MCF 10A (cell line): ENCODE measurements at regions of chr19 and their contacts with region 1.

Region 1: GRCh38 chr19:44164673-44165512 is at the start of gene ZNF226:
- DNase-seq: peak; percentile 98
- H3K4me3 Mint-ChIP-seq: peak within 1 kb of the TSS; percentile 98
- H3K27ac Mint-ChIP-seq: peak within 1 kb of the TSS; percentile 96
- H3K4me1 Mint-ChIP-seq: peaks cover 9% of the 10 kb centered on the region
- H3K27me3 Mint-ChIP-seq: no peaks in the 10 kb centered on the region
- CTCF ChIP-seq: no peak
- total RNA-seq, gene ZNF226: 23.4 and 32.5 TPM in 2 replicates

Region 2: DNA sequence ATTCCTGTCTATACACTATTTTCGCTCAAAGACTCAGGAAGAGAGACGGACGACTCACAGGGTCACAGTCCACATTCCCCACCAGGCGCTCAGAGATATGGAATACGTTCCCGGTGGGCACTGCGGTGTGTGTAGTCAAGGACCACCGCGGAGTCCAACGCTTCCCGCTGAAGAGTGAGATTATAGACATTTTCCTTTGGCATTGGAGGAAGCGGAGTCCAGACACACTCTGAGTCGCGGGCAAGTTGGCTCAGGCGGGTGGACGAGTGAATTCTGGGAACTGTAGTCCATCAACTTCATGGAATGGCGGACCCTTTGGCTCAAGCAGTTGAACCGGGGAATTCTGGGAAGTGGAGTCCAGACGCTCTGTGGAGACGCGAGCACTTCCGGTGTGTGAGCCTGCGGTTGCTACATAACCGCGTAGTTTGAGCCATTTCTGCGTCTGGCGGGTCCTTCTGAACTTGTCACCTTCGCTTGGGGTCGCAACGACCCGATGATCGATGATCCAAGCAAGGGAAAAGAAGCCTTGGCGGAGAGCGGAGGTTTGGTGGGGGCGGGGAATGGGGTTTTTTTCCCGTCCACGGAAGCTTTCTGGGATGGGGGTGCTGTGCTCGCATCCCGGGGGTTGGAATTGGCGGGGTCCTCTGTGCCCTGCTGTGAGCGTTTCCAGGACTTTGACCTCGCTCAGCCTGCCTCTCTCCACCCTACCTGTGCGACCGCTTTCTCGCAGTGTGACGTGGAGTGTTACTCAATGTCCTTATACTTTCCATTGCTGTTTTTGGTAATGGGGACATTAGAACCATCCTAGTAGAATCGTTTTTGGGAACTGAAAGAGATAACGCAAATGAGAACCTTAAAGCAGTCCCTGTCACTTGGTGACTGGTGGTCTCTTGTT is 162.1 kb before region 1 on chr19 and contains the start of gene ZNF230:
- CTCF ChIA-PET with region 1: interaction called, 3 read pairs
- POLR2A ChIA-PET with region 1: interaction called, 18 read pairs
- intact Hi-C with region 1: no loop called
- DNase-seq: peak; percentile 99
- H3K4me3 Mint-ChIP-seq: peak within 1 kb of the TSS; percentile 84
- H3K27ac Mint-ChIP-seq: peak within 1 kb of the TSS; percentile 90
- H3K4me1 Mint-ChIP-seq: peaks cover 14% of the 10 kb centered on the region
- H3K27me3 Mint-ChIP-seq: no peaks in the 10 kb centered on the region
- CTCF ChIP-seq: no peak
- total RNA-seq, gene ZNF230: 2.9 and 4.0 TPM in 2 replicates

Region 3: GRCh38 chr19:44019498-44019897 is 145.4 kb before region 1 on chr19:
- CTCF ChIA-PET with region 1: no interaction called
- POLR2A ChIA-PET with region 1: no interaction called
- intact Hi-C with region 1: no loop called
- DNase-seq: no peak
- H3K4me3 Mint-ChIP-seq: no peak overlapping the region
- H3K27ac Mint-ChIP-seq: no peak overlapping the region
- H3K4me1 Mint-ChIP-seq: no peaks in the 10 kb centered on the region
- H3K27me3 Mint-ChIP-seq: no peaks in the 10 kb centered on the region
- CTCF ChIP-seq: no peak

Region 4: DNA sequence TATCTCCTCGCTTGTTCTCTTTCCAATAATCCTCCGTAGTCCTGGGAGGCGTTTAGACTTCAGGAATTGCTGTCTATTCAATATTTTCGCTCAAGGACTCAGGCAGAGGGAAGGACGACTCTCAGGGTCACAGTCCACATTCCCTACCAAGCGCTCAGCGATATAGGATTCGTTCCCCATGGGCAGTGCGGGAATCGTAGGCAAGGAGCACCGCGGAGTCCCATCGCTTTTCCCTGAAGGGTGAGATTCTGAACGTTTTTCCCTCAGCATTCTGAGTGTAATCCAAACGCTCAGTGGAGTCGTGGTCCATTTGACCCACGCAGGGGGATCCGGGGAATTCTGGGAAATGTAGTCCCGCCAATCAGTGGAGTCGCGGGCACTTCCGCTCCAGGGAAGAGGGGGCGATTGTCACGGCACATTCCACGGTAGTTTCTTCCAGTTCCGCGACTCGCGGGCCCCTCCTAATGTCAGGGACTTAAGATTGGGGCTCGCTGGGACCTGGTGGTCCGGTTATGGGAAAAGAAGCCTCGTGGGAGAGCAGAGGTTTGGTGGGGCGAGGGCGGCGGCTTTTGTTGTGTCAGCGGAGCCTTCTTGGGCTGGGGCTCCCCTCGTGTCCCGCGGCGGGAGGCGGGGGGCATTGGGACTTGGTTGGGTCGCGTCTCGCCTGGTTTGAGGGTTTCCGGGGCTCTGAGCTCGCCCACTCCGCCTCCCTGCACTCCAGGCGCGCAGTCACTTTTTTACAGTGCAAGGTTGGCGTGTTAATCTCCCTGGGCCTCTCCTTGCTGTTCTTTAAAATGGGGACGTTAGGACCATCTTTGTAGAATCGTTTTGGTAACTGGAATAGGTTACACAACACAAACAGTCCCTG is 23.5 kb before region 1 on chr19 and contains the start of gene ZNF234:
- CTCF ChIA-PET with region 1: no interaction called
- POLR2A ChIA-PET with region 1: interaction called, 30 read pairs
- intact Hi-C with region 1: no loop called
- DNase-seq: peak; percentile 83
- H3K4me3 Mint-ChIP-seq: peak within 1 kb of the TSS; percentile 78
- H3K27ac Mint-ChIP-seq: peak within 1 kb of the TSS; percentile 83
- H3K4me1 Mint-ChIP-seq: peaks cover 6% of the 10 kb centered on the region
- H3K27me3 Mint-ChIP-seq: no peaks in the 10 kb centered on the region
- CTCF ChIP-seq: no peak
- total RNA-seq, gene ZNF234: 9.5 and 9.6 TPM in 2 replicates

Region 5: DNA sequence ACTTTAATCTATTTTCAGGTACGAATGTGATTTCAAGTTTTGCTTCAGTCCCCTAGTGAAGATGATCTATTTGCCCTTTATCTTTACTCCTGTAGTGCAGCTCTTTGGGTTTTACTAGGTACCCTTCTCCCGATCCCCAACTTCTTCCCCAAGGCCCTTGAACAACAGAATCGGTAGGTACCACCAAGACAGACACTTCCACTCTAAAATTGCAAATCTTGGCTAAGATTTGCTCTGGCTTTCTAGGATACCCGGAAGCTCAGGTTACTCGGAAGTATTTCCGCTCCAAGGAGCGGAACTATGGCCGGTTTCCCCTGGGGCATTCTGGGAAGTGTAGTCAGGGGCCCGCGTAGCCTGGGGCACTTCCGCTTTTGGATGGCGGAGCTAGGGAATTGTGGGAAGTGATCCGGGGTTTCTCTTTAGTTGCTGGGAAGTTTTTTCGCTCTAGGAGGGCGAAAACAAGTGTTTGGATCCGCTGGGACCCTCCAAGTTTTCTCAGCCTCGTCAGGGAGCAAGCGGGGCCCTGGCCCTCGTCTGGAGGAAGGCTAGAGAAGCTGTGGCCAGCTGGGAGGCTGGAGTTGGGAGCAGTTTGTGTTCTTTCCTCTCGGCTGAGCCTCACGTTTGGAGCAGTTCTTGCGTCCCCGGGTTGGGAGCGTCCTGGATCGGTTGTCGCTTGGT is 42.4 kb after region 1 on chr19:
- CTCF ChIA-PET with region 1: no interaction called
- POLR2A ChIA-PET with region 1: interaction called, 42 read pairs
- intact Hi-C with region 1: loop called (anchors 1 kb)
- DNase-seq: peak; percentile 98
- H3K4me3 Mint-ChIP-seq: peak overlapping the region; percentile 99
- H3K27ac Mint-ChIP-seq: peak overlapping the region; percentile 99
- H3K4me1 Mint-ChIP-seq: peaks cover 13% of the 10 kb centered on the region
- H3K27me3 Mint-ChIP-seq: no peaks in the 10 kb centered on the region
- CTCF ChIP-seq: no peak

Region 6: GRCh38 chr19:44282846-44283245 is 118.0 kb after region 1 on chr19:
- CTCF ChIA-PET with region 1: no interaction called
- POLR2A ChIA-PET with region 1: no interaction called
- intact Hi-C with region 1: no loop called
- DNase-seq: no peak
- H3K4me3 Mint-ChIP-seq: no peak overlapping the region
- H3K27ac Mint-ChIP-seq: no peak overlapping the region
- H3K4me1 Mint-ChIP-seq: no peaks in the 10 kb centered on the region
- H3K27me3 Mint-ChIP-seq: no peaks in the 10 kb centered on the region
- CTCF ChIP-seq: no peak

Region 7: GRCh38 chr19:44304659-44305193 is 139.8 kb after region 1 on chr19 and contains the start of gene ZNF235:
- CTCF ChIA-PET with region 1: no interaction called
- POLR2A ChIA-PET with region 1: interaction called, 17 read pairs
- intact Hi-C with region 1: no loop called
- DNase-seq: peak; percentile 99
- H3K4me3 Mint-ChIP-seq: peak within 1 kb of the TSS; percentile 90
- H3K27ac Mint-ChIP-seq: peak within 1 kb of the TSS; percentile 64
- H3K4me1 Mint-ChIP-seq: peaks cover 4% of the 10 kb centered on the region
- H3K27me3 Mint-ChIP-seq: no peaks in the 10 kb centered on the region
- CTCF ChIP-seq: no peak
- total RNA-seq, gene ZNF235: 2.7 and 3.7 TPM in 2 replicates